Sigmoid colon (tissue), 7 donors: ENCODE measurements at regions of chr22 and their contacts with region 1.

Region 1: DNA sequence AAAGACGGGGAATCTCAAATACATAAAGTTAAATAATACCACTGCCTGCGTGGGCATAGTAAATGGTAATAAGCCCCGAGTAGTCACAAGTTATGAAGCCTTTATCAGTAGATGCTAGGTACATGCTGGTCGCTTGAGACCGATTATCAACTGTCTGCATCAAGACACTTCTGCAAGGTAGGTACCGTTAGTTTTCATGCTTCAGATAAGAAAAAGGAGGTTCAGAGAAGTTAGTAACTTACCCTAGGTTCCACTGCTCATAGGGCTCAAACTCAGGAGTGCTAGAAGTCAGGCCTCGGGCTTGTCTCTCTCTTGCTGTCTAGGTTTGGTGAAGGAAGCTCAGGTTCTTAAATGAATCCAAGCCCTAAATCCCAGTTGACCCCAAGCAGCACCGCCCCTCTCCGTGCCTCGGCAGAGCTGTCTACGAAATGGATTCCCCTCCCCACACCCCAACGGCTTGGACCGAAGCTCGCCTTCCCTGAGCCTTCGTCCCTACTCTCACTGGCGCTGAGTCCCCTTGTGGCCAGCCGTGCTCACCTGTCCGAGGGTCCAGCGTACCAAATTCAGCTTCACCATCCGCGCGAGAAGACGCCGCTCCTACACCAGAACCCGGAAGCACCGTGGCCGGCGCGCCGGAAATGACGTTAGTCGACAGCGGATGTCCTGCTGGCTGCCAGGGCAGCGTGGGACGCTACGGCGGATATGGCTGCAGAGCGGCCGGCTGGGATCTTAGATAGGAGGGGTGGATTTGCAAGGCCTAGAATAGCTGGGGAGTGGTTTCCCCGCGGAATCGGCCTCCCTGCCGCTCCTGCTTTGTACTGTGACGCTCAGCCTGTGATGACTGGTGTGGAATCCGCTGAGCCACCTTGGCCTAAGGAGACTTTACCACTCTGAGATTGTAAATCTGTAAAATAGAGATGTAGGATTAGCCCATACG is at the start of gene TFIP11:
- DNase-seq: peak; percentile 96
- H3K4me3 ChIP-seq: peak within 1 kb of the TSS; percentile 71 to 87 (median 82)
- H3K27ac ChIP-seq: peak within 1 kb of the TSS; percentile 78 to 83 (median 80)
- H3K4me1 ChIP-seq: peaks cover 0 to 26% (median 24%) of the 10 kb centered on the region in 4 donors
- H3K27me3 ChIP-seq: no peaks in the 10 kb centered on the region
- CTCF ChIP-seq: no peak
- EP300 ChIP-seq: no peak
- POLR2A ChIP-seq: peak; percentile 46 to 51
- total RNA-seq, gene TFIP11: 14.0 to 19.1 (median 15.8) TPM

Region 2: GRCh38 chr22:26485806-26486390 is 26.2 kb before region 1 on chr22:
- intact Hi-C with region 1: loop called (anchors 1 kb)
- DNase-seq: no peak
- H3K4me3 ChIP-seq: no peak overlapping the region
- H3K27ac ChIP-seq: peak overlapping the region in 2 of 4 donors; percentile 88 to 91
- H3K4me1 ChIP-seq: peaks cover 0 to 40% (median 36%) of the 10 kb centered on the region in 4 donors
- H3K27me3 ChIP-seq: no peaks in the 10 kb centered on the region
- CTCF ChIP-seq: no peak
- EP300 ChIP-seq: no peak
- POLR2A ChIP-seq: no peak

Region 3: GRCh38 chr22:26589845-26590736 is 78.0 kb after region 1 on chr22 and contains the start of gene TPST2:
- intact Hi-C with region 1: loop called (anchors 2 kb)
- DNase-seq: peak; percentile 86
- H3K4me3 ChIP-seq: peak within 1 kb of the TSS; percentile 65 to 85 (median 78)
- H3K27ac ChIP-seq: peak within 1 kb of the TSS; percentile 75 to 80 (median 78)
- H3K4me1 ChIP-seq: peaks cover 4 to 19% (median 12%) of the 10 kb centered on the region in 4 donors
- H3K27me3 ChIP-seq: no peaks in the 10 kb centered on the region
- CTCF ChIP-seq: no peak
- EP300 ChIP-seq: no peak
- POLR2A ChIP-seq: peak; percentile 25 to 37
- total RNA-seq, gene TPST2: 15.9 to 24.3 (median 17.2) TPM